IMR-90 (cell line): ENCODE measurements at regions of chr16 and their contacts with region 1.

Region 1: GRCh38 chr16:75519881-75520280 is 16.0 kb downstream of the CHST5 start:
- DNase-seq: no peak
- ATAC-seq: no peak
- H3K4me3 ChIP-seq: no peak overlapping the region
- H3K27ac ChIP-seq: no peak overlapping the region
- H3K4me1 ChIP-seq: no peaks in the 10 kb centered on the region
- H3K27me3 ChIP-seq: no peaks in the 10 kb centered on the region
- CTCF ChIP-seq: no peak
- POLR2A ChIP-seq: no peak
- RAD21 ChIP-seq: no peak

Region 2: DNA sequence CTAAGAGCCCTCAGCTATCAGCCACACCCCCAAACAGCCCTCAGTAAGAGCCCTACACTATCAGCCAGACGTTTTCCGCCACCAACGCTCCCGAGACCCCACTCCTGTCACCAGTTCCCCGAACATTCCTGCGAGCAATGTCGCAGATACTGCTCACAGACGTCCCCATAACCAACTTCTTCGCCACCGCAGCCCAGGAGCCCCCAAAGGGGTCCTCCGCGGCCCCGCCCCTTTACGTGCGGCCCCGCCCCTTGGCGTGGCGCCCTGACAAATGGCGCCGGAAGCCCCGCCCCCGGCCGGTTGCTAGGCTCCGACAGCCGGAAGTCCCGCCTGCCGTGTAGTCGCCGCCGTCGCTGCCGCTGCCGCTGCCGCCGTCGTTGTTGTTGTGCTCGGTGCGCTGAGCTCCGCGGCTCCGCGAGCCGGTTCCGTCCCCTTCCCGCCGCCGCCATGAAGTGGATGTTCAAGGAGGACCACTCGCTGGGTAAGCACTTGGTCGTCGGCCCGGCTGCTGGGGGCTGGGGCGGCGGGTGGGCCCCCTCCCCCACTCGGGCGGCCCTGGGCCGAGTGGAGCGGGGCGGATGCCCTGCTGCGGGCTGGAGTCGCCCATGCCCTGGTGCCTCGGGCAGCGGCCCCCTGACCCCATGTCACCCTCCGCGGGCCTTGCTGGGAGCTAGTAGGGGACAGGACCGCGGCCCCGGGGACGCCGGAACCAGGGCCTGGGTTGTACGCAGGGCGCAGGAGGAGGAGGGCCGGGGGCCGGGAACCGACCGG is 46.3 kb after region 1 on chr16 and contains the start of gene GABARAPL2:
- CTCF ChIA-PET with region 1: interaction called, 5 read pairs
- POLR2A ChIA-PET with region 1: no interaction called
- dilution Hi-C with region 1: no loop called
- in situ Hi-C with region 1: no loop called
- intact Hi-C with region 1: loop called (anchors 1 kb)
- DNase-seq: peak; percentile 56
- ATAC-seq: peak; percentile 89
- H3K4me3 ChIP-seq: peak within 1 kb of the TSS; percentile 54
- H3K27ac ChIP-seq: peak within 1 kb of the TSS; percentile 83
- H3K4me1 ChIP-seq: peaks cover 4% of the 10 kb centered on the region; the same call in 1 of the 2 replicates
- H3K27me3 ChIP-seq: no peaks in the 10 kb centered on the region; the same call in 1 of the 2 replicates
- CTCF ChIP-seq: no peak
- POLR2A ChIP-seq: no peak
- RAD21 ChIP-seq: no peak
- total RNA-seq, gene GABARAPL2: 33.3 and 55.8 TPM in 2 replicates

Region 3: DNA sequence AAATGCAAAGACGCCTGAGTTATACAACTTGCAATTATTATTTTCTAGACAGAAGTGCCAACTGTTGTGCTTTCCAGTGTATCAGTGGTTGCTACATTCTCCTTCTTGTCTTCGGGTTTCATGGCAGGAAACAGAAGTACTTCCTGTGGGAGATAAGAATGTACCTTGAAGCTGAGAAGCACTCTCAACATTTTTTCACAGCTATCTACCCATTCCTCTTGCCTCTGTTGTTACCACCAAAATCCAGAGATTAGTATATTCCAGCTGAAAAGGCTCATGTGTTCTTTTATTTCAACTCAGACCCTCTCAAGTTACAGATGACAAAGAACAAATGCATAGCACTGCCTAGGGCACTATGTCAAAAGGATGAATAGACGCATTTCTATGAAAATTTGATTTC is 108.0 kb after region 1 on chr16:
- CTCF ChIA-PET with region 1: no interaction called
- POLR2A ChIA-PET with region 1: no interaction called
- dilution Hi-C with region 1: no loop called
- in situ Hi-C with region 1: no loop called
- intact Hi-C with region 1: no loop called
- DNase-seq: peak; percentile 16
- ATAC-seq: no peak
- H3K4me3 ChIP-seq: no peak overlapping the region
- H3K27ac ChIP-seq: no peak overlapping the region
- H3K4me1 ChIP-seq: no peaks in the 10 kb centered on the region
- H3K27me3 ChIP-seq: no peaks in the 10 kb centered on the region
- CTCF ChIP-seq: no peak
- POLR2A ChIP-seq: no peak
- RAD21 ChIP-seq: no peak